ENCODE measurements at regions of chr20 and their contacts with region 1.

Region 1: DNA sequence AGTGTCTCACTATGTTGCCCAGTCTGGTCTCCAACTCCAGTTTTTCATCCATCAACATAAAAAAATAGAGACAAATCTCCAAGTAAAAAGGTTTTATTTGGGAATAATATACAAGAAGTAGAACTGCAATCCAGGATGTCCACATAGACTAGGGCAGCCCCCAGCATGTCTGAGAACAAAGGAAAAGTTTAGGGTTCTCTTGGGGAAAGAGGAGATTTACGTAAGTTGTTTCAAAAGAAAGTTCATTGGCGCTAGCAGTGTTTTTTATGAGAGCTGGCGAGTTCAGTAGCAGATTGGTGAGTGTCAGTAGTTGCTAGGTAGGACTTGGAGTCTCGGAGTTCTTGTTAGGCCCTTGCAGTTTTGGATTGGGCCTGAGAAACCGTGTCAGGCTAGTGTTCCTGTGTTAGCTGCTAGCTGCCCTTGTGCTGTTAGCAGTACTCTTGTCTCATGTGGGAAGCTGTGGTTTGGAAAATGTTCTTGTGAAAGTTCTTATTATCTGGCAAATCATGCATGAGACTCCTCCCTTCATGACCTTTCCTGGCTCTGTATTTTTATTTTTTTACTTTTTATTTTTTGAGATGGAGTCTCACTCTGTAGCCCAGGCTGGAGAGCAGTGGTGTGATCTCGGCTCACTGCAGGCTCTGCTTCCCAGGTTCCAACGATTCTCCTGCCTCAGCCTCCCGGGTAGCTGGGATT is 24.7 kb downstream of the TTLL9 start:
- DNase-seq: peak; percentile 75
- ATAC-seq: peak; percentile 100
- H3K4me3 ChIP-seq: no peak overlapping the region
- H3K27ac ChIP-seq: peak overlapping the region; percentile 62
- H3K4me1 ChIP-seq: no peaks in the 10 kb centered on the region; the same call in 1 of the 2 replicates
- H3K27me3 ChIP-seq: no peaks in the 10 kb centered on the region
- CTCF ChIP-seq: no peak
- EP300 ChIP-seq: peak in 1 of 2 experiments; percentile 35; a peak in 1 of 4 replicates
- POLR2A ChIP-seq: peak; percentile 54
- RAD21 ChIP-seq: no peak

Region 2: DNA sequence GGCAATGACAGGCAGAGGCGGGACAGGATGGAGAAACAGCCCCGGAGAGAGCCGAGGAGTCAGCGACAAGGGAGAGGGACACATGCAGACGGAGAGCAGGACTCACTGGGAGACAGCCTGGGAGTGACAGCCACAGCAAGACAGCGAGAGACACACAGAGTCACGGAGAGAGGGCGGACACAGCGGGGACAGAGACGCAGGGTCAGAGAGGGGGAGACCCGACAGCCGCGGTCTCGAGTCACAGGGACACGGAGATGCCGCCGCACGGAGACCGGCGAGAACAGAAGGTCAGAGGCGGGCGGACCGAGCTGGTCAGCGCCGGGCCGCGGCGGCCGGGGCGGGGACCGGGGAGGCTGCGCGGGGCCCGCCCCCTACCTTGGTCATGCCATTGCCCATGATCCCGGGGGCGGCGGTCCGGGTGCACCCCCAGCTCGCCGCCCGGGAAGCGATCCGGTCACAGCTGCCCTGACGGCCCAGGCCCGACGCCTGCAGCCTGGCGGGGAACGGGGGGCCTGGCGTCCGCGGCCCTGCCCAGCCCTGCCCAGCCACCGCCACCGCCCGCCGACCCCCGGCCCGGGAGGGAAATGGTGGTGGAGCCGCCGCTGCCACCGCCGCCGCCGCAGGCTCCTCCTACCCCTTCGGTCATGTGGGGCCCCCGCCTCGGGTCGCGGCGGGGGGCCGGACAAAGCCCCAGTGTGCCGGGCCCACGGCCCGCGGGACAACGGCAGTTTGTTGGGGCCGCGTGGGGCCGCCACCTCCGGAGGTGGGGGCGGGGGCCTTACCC is 25.0 kb before region 1 on chr20 and contains the starts of genes DUSP15 and TTLL9:
- CTCF ChIA-PET with region 1: interaction called, 7 read pairs
- POLR2A ChIA-PET with region 1: interaction called, 12 read pairs
- RAD21 ChIA-PET with region 1: interaction called, 6 read pairs
- SMC1A ChIA-PET with region 1: interaction called, 13 read pairs
- in situ Hi-C with region 1: no loop called
- intact Hi-C with region 1: no loop called
- DNase-seq: no peak
- ATAC-seq: peak; percentile 65
- H3K4me3 ChIP-seq: peak within 1 kb of the TSS; percentile 41; the same call in 1 of the 2 replicates
- H3K27ac ChIP-seq: no peak within 1 kb of the TSS
- H3K4me1 ChIP-seq: peaks cover 13% of the 10 kb centered on the region
- H3K27me3 ChIP-seq: peaks cover 6 to 13% of the 10 kb centered on the region in 2 experiments
- CTCF ChIP-seq: no peak
- EP300 ChIP-seq: no peak
- POLR2A ChIP-seq: peak; percentile 25; the same call in 1 of the 2 replicates
- RAD21 ChIP-seq: no peak
- polyA plus RNA-seq, gene DUSP15: 0.06 TPM in 1 of 2 experiments, not detected in the other
- polyA plus RNA-seq, gene TTLL9: 0.03 TPM in 1 of 2 experiments, not detected in the other

Region 3: DNA sequence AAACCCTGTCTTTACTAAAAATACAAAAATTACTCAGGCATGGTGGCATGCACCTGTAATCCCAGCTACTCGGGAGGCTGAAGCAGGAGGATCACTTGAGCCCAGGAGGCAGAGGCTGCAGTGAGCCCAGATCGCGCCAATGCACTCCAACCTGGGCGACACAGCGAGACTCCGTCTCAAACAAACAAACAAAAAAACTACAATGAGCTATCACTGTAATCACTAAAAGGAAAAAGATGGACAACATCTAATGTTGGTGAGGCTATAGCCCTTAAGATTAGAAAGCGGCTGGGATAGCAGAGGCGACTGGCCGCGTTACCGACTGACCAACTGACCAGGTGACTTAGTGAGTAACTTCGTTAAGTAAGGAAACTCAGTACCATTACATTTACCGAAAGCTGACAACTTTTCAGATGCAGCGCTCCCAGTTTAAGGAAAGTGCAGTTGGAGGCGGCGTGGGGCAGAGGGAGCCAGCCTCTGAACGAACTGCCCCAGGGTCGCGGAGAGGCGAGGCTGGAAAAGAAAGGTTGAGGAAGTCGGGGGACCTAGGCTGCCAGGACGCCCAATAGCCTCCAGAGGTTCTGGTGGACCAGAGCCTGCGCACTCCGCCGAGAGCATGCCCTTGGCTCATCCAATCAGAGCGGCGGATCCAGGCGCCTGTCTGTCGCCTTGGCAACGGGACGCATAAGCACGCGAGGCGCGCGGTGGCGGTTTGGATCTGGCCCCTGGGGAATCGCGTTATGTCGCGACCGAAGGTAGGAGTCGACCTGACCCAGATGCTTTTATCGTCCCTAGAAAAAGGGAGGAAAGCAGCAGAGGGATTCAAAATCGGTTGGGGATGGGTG is 15.8 kb before region 1 on chr20:
- CTCF ChIA-PET with region 1: interaction called, 5 read pairs
- POLR2A ChIA-PET with region 1: interaction called, 35 read pairs
- RAD21 ChIA-PET with region 1: interaction called, 11 read pairs
- SMC1A ChIA-PET with region 1: interaction called, 21 read pairs
- in situ Hi-C with region 1: no loop called
- intact Hi-C with region 1: no loop called
- DNase-seq: peak; percentile 45
- ATAC-seq: peak; percentile 98
- H3K4me3 ChIP-seq: peak overlapping the region; percentile 88
- H3K27ac ChIP-seq: no peak overlapping the region
- H3K4me1 ChIP-seq: peaks cover 3% of the 10 kb centered on the region; the same call in 1 of the 2 replicates
- H3K27me3 ChIP-seq: no peaks in the 10 kb centered on the region
- CTCF ChIP-seq: no peak
- EP300 ChIP-seq: no peak
- POLR2A ChIP-seq: no peak
- RAD21 ChIP-seq: no peak

Region 4: DNA sequence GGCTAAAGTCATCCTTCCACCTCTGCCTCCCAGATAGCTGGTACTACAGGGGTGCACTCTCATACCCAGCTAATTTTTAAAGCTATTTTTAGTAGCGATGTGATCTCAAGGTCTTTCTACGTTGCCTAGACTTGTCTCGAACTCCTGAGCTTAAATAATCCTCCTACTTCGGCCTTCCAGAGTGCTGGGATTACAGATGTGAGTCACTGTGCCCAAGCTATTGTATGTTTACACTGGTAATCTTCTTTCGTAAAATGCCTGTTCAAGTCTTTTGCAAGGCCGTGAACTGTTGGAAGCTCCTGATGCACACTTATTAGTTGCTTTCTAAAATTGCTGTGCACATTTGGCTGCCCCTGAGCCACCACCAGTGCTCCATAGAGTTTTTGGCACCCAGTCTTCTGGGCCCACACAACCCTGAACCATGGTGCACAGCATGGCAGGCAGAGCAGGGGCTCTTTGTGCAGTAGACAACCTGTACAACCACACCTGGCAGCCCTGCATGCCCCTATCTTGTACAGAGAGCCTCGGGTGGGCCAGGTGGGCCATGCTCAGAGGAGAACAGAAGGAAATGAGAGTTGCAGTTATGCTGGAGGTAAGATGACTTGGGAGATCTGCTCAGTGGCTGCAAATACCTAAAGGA is 23.5 kb after region 1 on chr20:
- CTCF ChIA-PET with region 1: interaction called, 5 read pairs
- POLR2A ChIA-PET with region 1: interaction called, 16 read pairs
- RAD21 ChIA-PET with region 1: interaction called, 17 read pairs
- SMC1A ChIA-PET with region 1: interaction called, 26 read pairs
- in situ Hi-C with region 1: no loop called
- intact Hi-C with region 1: no loop called
- DNase-seq: no peak
- ATAC-seq: no peak
- H3K4me3 ChIP-seq: no peak overlapping the region
- H3K27ac ChIP-seq: no peak overlapping the region
- H3K4me1 ChIP-seq: peaks cover 5% of the 10 kb centered on the region
- H3K27me3 ChIP-seq: no peaks in the 10 kb centered on the region
- CTCF ChIP-seq: no peak
- EP300 ChIP-seq: no peak
- POLR2A ChIP-seq: no peak
- RAD21 ChIP-seq: no peak

Region 5: DNA sequence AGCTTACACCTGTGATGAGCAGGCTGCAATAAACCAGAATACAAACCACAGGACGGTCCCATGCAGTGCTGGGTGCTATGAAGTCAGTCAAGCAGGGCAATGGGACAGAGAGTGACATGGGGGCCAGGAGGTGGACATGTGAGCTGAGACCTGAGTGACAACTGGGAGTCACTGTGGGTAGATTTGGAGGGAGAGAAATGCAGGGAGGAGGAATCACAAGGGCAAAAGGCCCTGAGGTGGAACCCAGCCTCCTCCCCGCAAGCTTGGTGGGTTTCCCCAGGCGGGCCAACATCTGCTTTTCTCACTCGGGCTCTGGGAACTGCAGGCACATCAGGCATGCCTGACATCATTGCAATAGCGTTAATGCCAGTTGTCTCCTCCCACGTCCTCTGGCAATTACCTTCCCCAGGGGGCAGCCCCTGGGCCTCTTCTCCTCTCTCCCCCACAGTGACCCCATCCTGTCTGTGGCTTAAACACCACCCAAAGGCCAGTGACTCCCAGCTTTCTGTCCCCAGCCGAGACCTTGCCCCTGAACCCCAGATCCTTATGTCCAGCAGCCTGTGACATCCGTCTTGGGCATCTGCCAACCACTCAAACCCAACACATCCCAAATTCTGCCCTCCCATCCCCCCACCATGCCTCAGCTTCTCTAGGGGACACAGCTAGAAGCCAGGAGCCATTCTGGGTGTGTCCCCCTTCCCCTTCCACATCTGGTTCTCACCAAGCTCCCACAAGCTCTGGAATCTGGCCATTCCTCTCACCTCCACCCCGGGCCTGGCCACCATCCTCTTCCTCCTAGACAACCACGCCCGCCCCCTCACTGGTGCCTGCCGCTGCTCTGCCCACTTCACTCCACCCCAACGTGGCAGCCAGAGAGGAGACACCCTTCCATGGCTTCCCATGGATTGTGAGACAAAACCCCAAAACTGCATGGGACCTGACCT is 28.5 kb after region 1 on chr20:
- CTCF ChIA-PET with region 1: interaction called, 5 read pairs
- POLR2A ChIA-PET with region 1: interaction called, 16 read pairs
- RAD21 ChIA-PET with region 1: interaction called, 17 read pairs
- SMC1A ChIA-PET with region 1: interaction called, 26 read pairs
- in situ Hi-C with region 1: no loop called
- intact Hi-C with region 1: no loop called
- DNase-seq: peak; percentile 47
- ATAC-seq: peak; percentile 92
- H3K4me3 ChIP-seq: no peak overlapping the region
- H3K27ac ChIP-seq: no peak overlapping the region
- H3K4me1 ChIP-seq: peaks cover 11% of the 10 kb centered on the region
- H3K27me3 ChIP-seq: no peaks in the 10 kb centered on the region
- CTCF ChIP-seq: 0 out of 6 replicates have a peak, but pooled peaks of 1 of the 3 experiments have one; percentile 4
- EP300 ChIP-seq: peak in 1 of 2 experiments; percentile 72; a peak in 2 of 4 replicates
- POLR2A ChIP-seq: no peak
- RAD21 ChIP-seq: no peak

Measured in GM12878 (cell line).